Activated CD8-positive, alpha-beta memory T cell treated with anti-CD3 and anti-CD28 coated beads, Interleukin-2, amount 10 ng/mL, durations not matched to agents 7 days and 5 days (primary cell): ENCODE measurements at regions of chr1 and their contacts with region 1.

Region 1: GRCh38 chr1:155172732-155173477 is at the start of gene KRTCAP2:
- DNase-seq: peak; percentile 98
- ATAC-seq: peak; percentile 84
- H3K4me3 Mint-ChIP-seq: peak within 1 kb of the TSS; percentile 82
- H3K27ac Mint-ChIP-seq: peak within 1 kb of the TSS; percentile 90
- H3K4me1 Mint-ChIP-seq: peaks cover 51% of the 10 kb centered on the region
- H3K27me3 Mint-ChIP-seq: no peaks in the 10 kb centered on the region
- total RNA-seq, gene KRTCAP2: 166 to 177 TPM

Region 2: DNA sequence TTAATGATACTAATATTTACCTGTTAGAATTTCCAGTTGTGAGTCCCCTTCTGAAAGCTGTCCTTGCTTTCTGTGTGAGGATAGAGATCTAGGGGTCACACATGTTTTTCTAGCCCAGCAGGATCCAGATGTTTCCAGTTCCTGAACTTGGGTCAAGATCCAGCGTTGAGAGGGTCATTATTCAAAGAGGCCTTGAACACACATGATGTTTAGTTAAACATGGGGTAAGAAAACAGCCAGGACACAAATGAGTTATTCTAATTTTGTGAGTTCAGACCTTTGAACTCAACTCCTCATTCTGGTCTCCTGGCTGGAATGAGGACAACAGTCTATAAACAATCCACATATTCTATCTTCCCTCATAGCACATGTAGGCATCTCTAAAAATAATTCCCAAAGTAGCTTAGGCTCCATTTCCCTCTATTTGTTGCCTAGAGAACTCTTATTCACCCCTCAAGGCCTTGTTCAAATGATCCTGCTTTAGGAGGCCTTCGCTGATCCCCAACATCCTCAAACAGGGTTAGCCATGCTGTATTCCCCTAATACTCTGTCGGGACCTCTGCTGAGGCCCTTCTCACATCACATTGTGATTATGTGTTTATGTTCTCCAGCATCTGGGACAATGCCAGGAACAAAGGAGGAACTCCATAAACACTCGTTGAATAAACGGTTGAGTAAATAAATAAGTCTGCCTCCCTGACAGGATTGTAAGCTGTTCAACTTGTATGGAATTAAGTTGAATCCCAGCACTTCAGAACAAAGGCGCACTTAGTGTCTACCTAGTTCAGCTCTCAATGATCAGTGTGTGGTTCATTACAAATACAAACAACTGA is 287.8 kb before region 1 on chr1:
- CTCF ChIA-PET with region 1: no interaction called
- DNase-seq: no peak
- ATAC-seq: no peak
- H3K4me3 Mint-ChIP-seq: no peak overlapping the region
- H3K27ac Mint-ChIP-seq: no peak overlapping the region
- H3K4me1 Mint-ChIP-seq: peaks cover 25% of the 10 kb centered on the region
- H3K27me3 Mint-ChIP-seq: peaks cover 10% of the 10 kb centered on the region

Region 3: GRCh38 chr1:154990276-154990675 is 182.6 kb before region 1 on chr1:
- CTCF ChIA-PET with region 1: no interaction called
- DNase-seq: no peak
- ATAC-seq: no peak
- H3K4me3 Mint-ChIP-seq: no peak overlapping the region
- H3K27ac Mint-ChIP-seq: no peak overlapping the region
- H3K4me1 Mint-ChIP-seq: peaks cover 13% of the 10 kb centered on the region
- H3K27me3 Mint-ChIP-seq: no peaks in the 10 kb centered on the region

Region 4: DNA sequence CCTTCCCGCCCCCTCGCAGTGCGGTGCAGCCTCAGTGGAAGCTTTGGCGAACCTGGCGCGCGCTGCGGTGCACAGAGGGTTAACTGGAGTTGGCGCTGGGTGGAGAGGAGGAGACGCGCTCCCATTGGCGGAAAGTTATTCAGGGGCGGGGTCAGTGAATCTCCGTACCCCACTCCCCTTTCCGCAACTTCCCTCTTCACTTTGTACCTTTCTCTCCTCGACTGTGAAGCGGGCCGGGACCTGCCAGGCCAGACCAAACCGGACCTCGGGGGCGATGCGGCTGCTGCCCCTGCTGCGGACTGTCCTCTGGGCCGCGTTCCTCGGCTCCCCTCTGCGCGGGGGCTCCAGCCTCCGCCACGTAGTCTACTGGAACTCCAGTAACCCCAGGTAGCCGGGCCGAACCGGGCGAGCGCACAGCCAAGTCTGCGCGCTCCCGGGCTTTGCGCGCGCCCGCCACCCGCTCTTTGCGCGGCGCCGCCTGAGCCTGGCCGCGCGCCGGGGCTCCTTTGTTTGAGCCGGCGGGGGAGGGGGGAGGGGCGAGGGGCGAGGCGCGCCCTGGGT is 109.3 kb before region 1 on chr1 and contains the start of gene EFNA4:
- CTCF ChIA-PET with region 1: interaction called, 12 read pairs
- DNase-seq: peak; percentile 90
- ATAC-seq: peak; percentile 88
- H3K4me3 Mint-ChIP-seq: peak within 1 kb of the TSS; percentile 83
- H3K27ac Mint-ChIP-seq: peak within 1 kb of the TSS; percentile 8
- H3K4me1 Mint-ChIP-seq: peaks cover 26% of the 10 kb centered on the region
- H3K27me3 Mint-ChIP-seq: peaks cover 4% of the 10 kb centered on the region
- total RNA-seq, gene EFNA4: 3.8 to 5.3 TPM

Region 5: DNA sequence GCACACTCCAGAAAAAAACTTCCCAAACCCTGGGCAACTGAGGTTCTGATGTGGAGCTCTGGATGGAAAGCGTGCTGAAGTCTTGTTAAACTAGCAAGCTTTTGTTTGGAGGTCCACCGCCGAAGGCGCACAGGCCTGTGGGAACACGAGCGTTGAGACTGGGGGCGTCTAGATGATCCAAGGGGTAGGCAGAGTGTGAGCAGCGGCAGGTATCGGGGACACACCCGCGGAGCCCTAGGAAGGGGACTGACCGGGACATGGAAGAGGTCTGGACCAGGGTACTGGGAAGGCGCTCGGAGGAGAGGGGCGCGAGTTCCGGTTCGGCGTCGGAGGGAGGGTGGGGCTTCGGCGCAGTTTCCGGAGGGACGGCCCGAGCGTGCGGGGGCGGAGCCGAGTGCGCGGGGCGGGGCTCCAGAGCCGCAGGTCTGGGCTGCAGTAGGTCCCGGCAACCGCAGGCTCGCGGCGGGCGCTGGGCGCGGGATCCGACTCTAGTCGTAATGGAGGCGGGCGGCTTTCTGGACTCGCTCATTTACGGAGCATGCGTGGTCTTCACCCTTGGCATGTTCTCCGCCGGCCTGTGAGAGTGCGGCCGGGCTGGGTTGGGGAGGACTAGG is 37.4 kb before region 1 on chr1 and contains the start of gene SLC50A1:
- CTCF ChIA-PET with region 1: interaction called, 26 read pairs
- DNase-seq: peak; percentile 95
- ATAC-seq: peak; percentile 84
- H3K4me3 Mint-ChIP-seq: peak within 1 kb of the TSS; percentile 97
- H3K27ac Mint-ChIP-seq: peak within 1 kb of the TSS; percentile 98
- H3K4me1 Mint-ChIP-seq: peaks cover 37% of the 10 kb centered on the region
- H3K27me3 Mint-ChIP-seq: peaks cover 2% of the 10 kb centered on the region
- total RNA-seq, gene SLC50A1: 39.8 to 41.2 TPM

Region 6: DNA sequence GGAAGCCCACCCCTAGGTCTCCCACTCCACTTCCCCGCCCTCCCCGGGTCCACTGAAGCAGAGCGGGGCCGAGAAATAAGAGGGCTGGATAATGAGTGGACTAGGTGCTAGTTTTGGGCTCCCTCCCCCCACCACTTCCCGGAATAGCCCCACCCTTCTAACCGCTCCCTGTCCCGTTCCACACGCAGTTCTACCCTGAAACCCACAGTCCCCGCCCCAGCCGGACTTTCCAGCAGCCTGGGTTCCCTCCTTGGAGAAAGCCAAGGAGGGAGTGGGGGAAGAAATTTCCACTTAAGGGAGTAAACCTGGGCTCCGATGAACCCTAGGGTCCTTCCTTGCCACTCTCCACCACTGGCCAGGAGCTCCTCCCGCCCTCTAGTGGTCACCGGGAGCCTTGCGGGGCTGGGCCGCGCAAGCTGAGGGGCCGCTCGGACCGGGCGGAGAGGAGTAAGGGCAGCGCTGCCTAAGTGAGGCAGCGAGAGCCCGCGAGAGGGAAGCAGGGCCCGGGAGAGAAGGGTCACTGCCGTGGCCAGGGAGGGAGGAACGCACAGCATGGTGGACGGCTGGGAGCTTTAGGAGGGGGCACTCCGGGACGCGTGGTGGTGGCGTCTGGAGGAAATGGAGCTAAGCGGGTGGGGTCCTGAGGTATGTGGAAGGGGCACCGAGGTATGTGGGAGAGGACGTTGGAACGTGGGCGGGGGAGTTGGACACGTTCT is 20.5 kb after region 1 on chr1:
- CTCF ChIA-PET with region 1: interaction called, 117 read pairs
- DNase-seq: peak; percentile 86
- ATAC-seq: peak; percentile 66
- H3K4me3 Mint-ChIP-seq: peak overlapping the region; percentile 73
- H3K27ac Mint-ChIP-seq: peak overlapping the region; percentile 92
- H3K4me1 Mint-ChIP-seq: peaks cover 29% of the 10 kb centered on the region
- H3K27me3 Mint-ChIP-seq: no peaks in the 10 kb centered on the region

Region 7: GRCh38 chr1:155227261-155228095 is 54.6 kb after region 1 on chr1:
- CTCF ChIA-PET with region 1: interaction called, 20 read pairs
- DNase-seq: peak; percentile 100
- ATAC-seq: peak; percentile 97
- H3K4me3 Mint-ChIP-seq: peak overlapping the region; percentile 98
- H3K27ac Mint-ChIP-seq: peak overlapping the region; percentile 98
- H3K4me1 Mint-ChIP-seq: peaks cover 41% of the 10 kb centered on the region
- H3K27me3 Mint-ChIP-seq: no peaks in the 10 kb centered on the region

Region 8: GRCh38 chr1:155352631-155353030 is 179.7 kb after region 1 on chr1:
- CTCF ChIA-PET with region 1: no interaction called
- DNase-seq: no peak
- ATAC-seq: no peak
- H3K4me3 Mint-ChIP-seq: no peak overlapping the region
- H3K27ac Mint-ChIP-seq: peak overlapping the region; percentile 15
- H3K4me1 Mint-ChIP-seq: no peaks in the 10 kb centered on the region
- H3K27me3 Mint-ChIP-seq: no peaks in the 10 kb centered on the region

Region 9: DNA sequence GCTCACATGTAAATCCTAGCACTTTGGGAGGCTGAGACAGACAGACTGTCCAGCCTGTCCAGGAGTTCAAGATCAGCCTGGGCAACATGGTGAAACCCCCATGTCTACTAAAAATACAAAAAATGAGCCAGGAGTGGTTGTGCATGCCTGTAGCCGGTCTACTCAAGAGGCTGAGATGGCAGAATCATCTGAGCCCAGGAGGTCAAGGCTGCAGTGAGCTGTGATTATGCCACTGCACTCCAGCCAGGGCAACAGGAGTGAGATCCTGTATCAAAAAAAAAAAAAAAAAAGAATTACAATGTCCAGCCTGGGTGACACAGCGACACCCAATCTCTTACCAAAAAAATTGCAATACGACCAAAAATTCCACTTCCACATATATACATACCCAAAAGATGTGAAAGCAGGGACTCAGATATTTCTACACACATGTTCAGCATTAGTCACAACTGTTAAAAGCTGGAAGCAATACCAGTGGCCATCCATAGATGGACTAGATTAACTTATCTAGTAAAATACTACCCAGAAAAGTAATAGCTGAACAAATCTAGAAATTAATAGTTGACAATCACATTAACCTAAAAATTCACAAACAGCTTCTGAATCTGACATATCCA is 340.5 kb after region 1 on chr1:
- CTCF ChIA-PET with region 1: no interaction called
- DNase-seq: no peak
- ATAC-seq: no peak
- H3K4me3 Mint-ChIP-seq: no peak overlapping the region
- H3K27ac Mint-ChIP-seq: no peak overlapping the region
- H3K4me1 Mint-ChIP-seq: peaks cover 30% of the 10 kb centered on the region
- H3K27me3 Mint-ChIP-seq: no peaks in the 10 kb centered on the region